Activated B cell treated with CpG ODN at 0.5 μM for 24 hours (primary cell): ENCODE measurements at regions of chr11 and their contacts with region 1.

Region 1: GRCh38 chr11:2885676-2886081 is at the start of gene CDKN1C:
- DNase-seq: peak; percentile 77
- ATAC-seq: peak; percentile 90
- H3K4me3 Mint-ChIP-seq: peak within 1 kb of the TSS; percentile 90
- H3K27ac Mint-ChIP-seq: no peak within 1 kb of the TSS
- H3K4me1 Mint-ChIP-seq: peaks cover 9% of the 10 kb centered on the region
- H3K27me3 Mint-ChIP-seq: peaks cover 9% of the 10 kb centered on the region
- CTCF ChIP-seq: no peak
- total RNA-seq, gene CDKN1C: 1.1 and 1.4 TPM in 2 replicates

Region 2: GRCh38 chr11:2196970-2197770 is 688.5 kb before region 1 on chr11:
- CTCF ChIA-PET with region 1: no interaction called
- POLR2A ChIA-PET with region 1: no interaction called
- intact Hi-C with region 1: loop called (anchors 10 kb)
- DNase-seq: peak; percentile 61
- ATAC-seq: peak; percentile 97
- H3K4me3 Mint-ChIP-seq: no peak overlapping the region
- H3K27ac Mint-ChIP-seq: peak overlapping the region; percentile 9
- H3K4me1 Mint-ChIP-seq: peaks cover 6% of the 10 kb centered on the region
- H3K27me3 Mint-ChIP-seq: peaks cover 10% of the 10 kb centered on the region
- CTCF ChIP-seq: peak; percentile 31

Region 3: DNA sequence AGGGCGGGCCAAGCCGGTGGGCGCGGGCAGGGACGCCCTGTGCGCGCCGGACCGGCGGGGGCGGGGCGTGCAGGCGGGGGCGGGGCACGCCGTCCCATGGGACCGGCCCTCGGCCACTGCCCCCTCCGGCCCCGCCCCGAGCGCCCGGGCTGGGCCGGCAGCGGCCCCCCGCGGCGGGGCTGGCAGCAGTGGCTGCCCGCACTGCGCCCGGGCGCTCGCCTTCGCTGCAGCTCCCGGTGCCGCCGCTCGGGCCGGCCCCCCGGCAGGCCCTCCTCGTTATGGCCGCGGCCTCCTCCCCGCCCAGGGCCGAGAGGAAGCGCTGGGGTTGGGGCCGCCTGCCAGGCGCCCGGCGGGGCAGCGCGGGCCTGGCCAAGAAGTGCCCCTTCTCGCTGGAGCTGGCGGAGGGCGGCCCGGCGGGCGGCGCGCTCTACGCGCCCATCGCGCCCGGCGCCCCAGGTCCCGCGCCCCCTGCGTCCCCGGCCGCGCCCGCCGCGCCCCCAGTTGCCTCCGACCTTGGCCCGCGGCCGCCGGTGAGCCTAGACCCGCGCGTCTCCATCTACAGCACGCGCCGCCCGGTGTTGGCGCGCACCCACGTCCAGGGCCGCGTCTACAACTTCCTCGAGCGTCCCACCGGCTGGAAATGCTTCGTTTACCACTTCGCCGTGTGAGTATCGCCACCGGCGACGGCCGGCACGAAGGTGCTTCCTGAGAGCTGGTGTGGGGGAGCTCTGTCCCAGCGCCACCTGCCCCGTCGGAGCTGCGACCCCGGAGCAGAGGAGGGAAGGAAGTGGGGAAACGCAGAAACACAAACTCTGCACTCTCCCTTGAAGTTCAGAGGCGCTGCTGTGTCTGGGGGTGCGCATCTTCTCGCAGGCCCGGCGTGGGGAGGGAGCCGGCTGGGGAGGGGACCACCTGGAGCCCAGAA is 440.6 kb before region 1 on chr11 and contains the start of gene KCNQ1:
- CTCF ChIA-PET with region 1: no interaction called
- POLR2A ChIA-PET with region 1: interaction called, 5 read pairs
- intact Hi-C with region 1: loop called (anchors 5 kb)
- DNase-seq: peak; percentile 71
- ATAC-seq: peak; percentile 85
- H3K4me3 Mint-ChIP-seq: peak within 1 kb of the TSS; percentile 85
- H3K27ac Mint-ChIP-seq: peak within 1 kb of the TSS; percentile 65
- H3K4me1 Mint-ChIP-seq: peaks cover 38% of the 10 kb centered on the region
- H3K27me3 Mint-ChIP-seq: no peaks in the 10 kb centered on the region
- CTCF ChIP-seq: no peak
- total RNA-seq, gene KCNQ1: 6.5 and 8.6 TPM in 2 replicates

Region 4: GRCh38 chr11:2791521-2792380 is 93.9 kb before region 1 on chr11:
- CTCF ChIA-PET with region 1: no interaction called
- POLR2A ChIA-PET with region 1: no interaction called
- intact Hi-C with region 1: loop called (anchors 5 kb)
- DNase-seq: peak; percentile 31
- ATAC-seq: peak; percentile 85
- H3K4me3 Mint-ChIP-seq: peak overlapping the region; percentile 79
- H3K27ac Mint-ChIP-seq: peak overlapping the region; percentile 18
- H3K4me1 Mint-ChIP-seq: peaks cover 8% of the 10 kb centered on the region
- H3K27me3 Mint-ChIP-seq: peaks cover 2% of the 10 kb centered on the region
- CTCF ChIP-seq: no peak

Region 5: GRCh38 chr11:2837096-2837601 is 48.5 kb before region 1 on chr11:
- CTCF ChIA-PET with region 1: no interaction called
- POLR2A ChIA-PET with region 1: no interaction called
- intact Hi-C with region 1: no loop called
- DNase-seq: no peak
- ATAC-seq: no peak
- H3K4me3 Mint-ChIP-seq: no peak overlapping the region
- H3K27ac Mint-ChIP-seq: no peak overlapping the region
- H3K4me1 Mint-ChIP-seq: no peaks in the 10 kb centered on the region
- H3K27me3 Mint-ChIP-seq: no peaks in the 10 kb centered on the region
- CTCF ChIP-seq: no peak

Region 6: DNA sequence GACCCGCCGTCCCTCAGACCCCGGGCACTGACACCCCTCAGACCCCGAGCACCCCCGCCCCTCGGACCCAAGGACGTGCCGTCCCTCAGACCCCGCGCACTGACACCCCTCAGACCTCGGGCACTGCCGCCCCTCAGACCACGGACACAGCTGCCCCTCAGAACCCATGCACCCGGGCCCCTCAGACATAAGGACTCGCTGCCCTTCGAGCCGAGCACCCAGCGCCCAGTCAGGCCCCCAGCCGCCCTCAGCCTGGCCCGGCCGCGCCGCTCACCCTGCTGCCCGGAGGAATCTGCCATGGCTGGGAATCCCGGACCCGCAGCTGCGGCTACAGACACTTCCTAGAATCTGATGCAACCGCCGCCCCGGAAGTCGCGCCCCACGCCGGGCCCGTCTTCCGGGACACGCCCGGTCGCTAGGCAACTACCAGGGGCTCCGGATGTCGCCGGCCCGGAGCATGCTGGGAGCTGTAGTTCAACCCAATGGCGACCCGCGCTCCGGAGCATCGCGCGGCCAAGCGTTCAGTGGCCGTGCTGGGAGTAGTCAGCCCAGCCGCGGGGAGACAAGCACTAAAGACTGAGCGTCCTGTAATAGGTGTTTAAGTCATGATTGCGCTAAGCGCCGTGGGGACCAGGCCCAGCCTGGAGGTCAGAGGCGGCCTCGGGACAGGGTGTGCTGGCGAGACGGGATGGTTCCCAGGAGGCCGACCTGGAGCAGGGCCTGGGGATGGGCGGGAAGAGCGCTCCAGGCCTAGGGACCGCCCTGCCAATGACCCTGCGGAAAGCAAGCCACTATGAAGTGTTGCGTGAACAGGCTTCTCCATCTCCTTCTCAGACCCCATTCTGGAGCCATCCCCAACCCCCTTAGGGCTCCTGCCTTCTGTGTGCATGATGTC is 171.6 kb after region 1 on chr11 and contains the start of gene CARS1:
- CTCF ChIA-PET with region 1: no interaction called
- POLR2A ChIA-PET with region 1: no interaction called
- intact Hi-C with region 1: loop called (anchors 1 kb)
- DNase-seq: peak; percentile 88
- ATAC-seq: peak; percentile 89
- H3K4me3 Mint-ChIP-seq: peak within 1 kb of the TSS; percentile 90
- H3K27ac Mint-ChIP-seq: peak within 1 kb of the TSS; percentile 85
- H3K4me1 Mint-ChIP-seq: peaks cover 36% of the 10 kb centered on the region
- H3K27me3 Mint-ChIP-seq: no peaks in the 10 kb centered on the region
- CTCF ChIP-seq: no peak
- total RNA-seq, gene CARS1: 95.9 and 110 TPM in 2 replicates